Dendritic cell treated with granulocyte-macrophage colony-stimulating factor and Interleukin-4, amounts not matched to agents 40 ng/mL and 50 ng/mL, for 4 days (primary cell): ENCODE measurements at regions of chr22 and their contacts with region 1.

Region 1: GRCh38 chr22:42090596-42091454 is at the start of gene NDUFA6:
- H3K4me3 Mint-ChIP-seq: peak within 1 kb of the TSS; percentile 98
- H3K27ac Mint-ChIP-seq: peak within 1 kb of the TSS; percentile 100
- H3K4me1 Mint-ChIP-seq: peaks cover 23% of the 10 kb centered on the region
- H3K27me3 Mint-ChIP-seq: no peaks in the 10 kb centered on the region

Region 2: DNA sequence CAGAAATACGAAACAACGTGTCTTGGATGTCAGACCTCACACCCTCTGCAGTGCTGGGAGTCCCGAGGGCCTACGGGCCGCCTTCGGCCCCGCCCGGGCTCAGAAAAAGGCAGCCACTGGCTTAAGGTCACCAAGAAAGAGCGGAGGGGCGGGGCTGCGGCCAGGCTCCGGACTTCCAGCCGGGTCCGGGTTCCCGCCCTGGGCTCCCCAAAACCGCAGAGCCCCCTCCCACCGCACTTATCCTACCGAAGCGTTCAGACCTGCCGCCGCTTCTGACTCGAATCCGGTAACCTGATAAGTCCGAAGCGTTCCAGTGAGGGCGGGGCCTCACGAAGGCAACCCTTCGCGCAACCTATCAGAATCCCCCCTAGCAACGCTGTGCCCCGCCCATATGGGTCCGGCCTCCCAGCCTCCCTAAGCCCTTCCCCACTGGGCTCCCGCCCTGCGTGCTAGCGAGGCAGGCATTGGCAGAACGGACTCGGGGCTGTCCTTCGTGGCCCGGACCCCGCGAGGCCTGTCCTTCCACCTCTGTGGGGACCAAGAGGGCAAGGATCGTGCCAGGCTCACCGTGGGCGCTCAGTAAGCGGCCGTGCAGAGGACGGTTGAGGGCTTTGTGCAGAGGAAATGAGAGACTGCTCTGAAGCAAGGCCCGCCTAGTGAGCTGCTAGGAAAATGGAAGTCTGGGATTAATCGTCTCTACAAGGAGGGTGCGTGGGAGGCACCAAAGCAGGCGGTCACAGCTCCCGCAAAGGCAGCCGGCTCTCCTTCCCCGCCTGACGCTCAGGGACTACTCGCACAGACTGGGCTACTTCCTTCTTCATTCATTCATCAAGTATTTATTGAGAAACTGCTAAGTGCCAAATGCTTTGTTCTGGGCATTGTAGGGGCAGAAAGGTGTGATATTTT is 20.1 kb before region 1 on chr22 and contains the start of gene NAGA:
- intact Hi-C with region 1: loop called (anchors 1 kb)
- H3K4me3 Mint-ChIP-seq: peak within 1 kb of the TSS; percentile 82
- H3K27ac Mint-ChIP-seq: peak within 1 kb of the TSS; percentile 96
- H3K4me1 Mint-ChIP-seq: peaks cover 76% of the 10 kb centered on the region
- H3K27me3 Mint-ChIP-seq: no peaks in the 10 kb centered on the region

Region 3: DNA sequence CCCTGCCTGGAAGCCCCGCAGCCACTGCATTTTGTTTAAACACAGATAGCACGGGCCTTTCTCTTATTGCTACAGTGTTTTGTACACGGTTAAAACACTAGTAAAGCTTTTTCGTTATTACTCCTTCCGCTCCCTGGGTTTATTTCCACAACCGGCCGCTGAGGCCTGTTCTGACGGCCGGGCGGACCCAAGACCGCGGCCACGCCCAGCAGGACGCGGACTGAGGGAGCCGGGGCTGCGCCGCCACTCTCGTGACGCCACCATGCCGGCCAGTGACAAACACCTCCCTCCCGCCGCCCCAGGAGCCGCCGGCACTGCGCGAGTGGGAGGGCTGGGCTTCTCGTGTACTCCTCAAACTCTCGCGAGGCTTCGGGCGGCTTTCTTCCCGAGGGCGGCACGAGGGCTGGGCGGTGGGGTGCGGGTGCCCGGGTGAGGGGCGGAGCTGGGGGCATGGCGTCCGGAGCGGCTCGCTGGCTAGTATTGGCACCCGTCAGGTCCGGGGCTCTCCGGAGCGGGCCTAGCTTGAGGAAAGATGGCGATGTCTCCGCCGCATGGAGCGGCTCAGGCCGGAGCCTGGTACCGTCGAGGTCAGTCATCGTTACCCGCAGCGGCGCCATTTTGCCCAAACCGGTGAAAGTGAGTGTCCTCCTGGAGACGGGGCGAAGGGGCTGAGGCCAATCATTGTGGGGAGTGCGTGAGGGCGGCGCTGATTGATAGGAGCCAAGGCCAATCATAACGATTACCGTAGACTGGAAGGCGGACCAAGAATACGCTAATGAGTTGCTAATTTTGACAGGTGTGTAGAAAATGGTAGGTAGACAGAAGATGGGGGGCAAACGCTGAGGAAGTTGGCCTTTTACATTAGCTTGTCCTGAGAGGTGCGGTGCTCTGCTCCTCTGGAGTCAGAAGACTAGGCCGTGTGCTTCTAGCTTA is 11.2 kb before region 1 on chr22 and contains the start of gene SMDT1:
- intact Hi-C with region 1: loop called (anchors 1 kb)
- H3K4me3 Mint-ChIP-seq: peak within 1 kb of the TSS; percentile 85
- H3K27ac Mint-ChIP-seq: peak within 1 kb of the TSS; percentile 98
- H3K4me1 Mint-ChIP-seq: peaks cover 60% of the 10 kb centered on the region
- H3K27me3 Mint-ChIP-seq: no peaks in the 10 kb centered on the region

Region 4: DNA sequence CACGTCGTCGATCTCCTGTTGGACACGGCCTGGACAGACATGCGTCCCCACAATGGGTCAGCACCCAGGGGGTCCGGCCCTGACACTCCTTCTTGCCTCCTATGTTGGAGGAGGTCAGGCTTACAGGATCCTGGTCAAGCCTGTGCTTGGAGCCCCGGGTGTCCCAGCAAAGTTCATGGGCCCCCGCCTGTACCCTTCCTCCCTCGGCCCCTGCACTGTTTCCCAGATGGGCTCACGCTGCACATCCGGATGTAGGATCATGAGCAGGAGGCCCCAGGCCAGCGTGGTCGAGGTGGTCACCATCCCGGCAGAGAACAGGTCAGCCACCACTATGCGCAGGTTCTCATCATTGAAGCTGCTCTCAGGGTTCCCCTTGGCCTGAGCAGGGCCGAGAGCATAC is 36.8 kb after region 1 on chr22:
- intact Hi-C with region 1: no loop called
- H3K4me3 Mint-ChIP-seq: no peak overlapping the region
- H3K27ac Mint-ChIP-seq: no peak overlapping the region
- H3K4me1 Mint-ChIP-seq: peaks cover 6% of the 10 kb centered on the region
- H3K27me3 Mint-ChIP-seq: peaks cover 26% of the 10 kb centered on the region